ENCODE measurements at regions of chr13 and their contacts with region 1.

Region 1: DNA sequence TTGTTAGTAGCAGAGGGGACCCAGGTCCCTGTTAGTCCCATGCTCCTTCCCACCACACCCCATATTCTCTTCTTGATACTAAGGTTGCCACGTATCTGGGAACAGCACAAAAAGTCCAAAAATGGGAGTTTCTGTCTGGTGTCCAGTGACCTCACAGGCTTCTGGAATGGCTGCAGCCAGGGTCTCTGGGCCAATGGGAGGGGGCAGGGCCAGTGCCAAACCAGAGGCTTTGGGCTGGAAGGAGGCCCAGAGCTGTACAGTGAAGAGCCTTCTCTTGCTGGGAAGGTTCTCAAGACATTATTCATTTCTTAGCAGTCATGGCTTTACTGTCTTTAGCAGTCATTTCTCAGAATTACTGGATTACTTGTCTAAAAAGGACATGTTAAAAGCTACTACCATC is 119.2 kb downstream of the FRY start:
- DNase-seq: peak; percentile 86 to 92
- ATAC-seq: peak; percentile 94
- H3K4me3 ChIP-seq: no peak overlapping the region
- H3K27ac ChIP-seq: peak overlapping the region; percentile 96
- H3K4me1 ChIP-seq: peaks cover 1 to 3% of the 10 kb centered on the region in 2 donors
- H3K27me3 ChIP-seq: no peaks in the 10 kb centered on the region

Region 2: DNA sequence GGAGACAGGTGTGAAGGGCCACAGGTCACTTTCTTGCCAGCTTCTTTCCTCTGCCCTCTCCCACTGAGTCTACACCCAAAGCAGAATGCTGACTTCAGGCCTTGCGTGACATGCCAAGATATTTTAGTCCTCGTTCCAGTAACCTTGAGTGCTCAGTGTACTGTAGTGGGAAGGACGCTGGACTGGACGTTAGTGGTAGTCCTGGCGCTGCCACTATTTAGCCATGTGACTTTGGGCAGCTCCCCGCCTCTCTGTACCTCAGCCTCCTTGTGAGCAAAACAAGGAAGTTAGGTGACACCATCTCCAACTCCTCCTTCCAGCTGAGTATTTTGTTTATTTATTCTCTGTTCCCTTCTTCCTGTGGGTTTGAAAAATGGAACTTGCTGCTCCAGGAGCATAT is 33.1 kb before region 1 on chr13:
- intact Hi-C with region 1: loop called in 1 of 2 experiments (anchors 5 kb)
- DNase-seq: peak; percentile 67 to 83
- ATAC-seq: peak; percentile 88
- H3K4me3 ChIP-seq: no peak overlapping the region
- H3K27ac ChIP-seq: peak overlapping the region; percentile 52 to 59
- H3K4me1 ChIP-seq: peaks cover 2% of the 10 kb centered on the region in 2 donors
- H3K27me3 ChIP-seq: no peaks in the 10 kb centered on the region

Region 3: DNA sequence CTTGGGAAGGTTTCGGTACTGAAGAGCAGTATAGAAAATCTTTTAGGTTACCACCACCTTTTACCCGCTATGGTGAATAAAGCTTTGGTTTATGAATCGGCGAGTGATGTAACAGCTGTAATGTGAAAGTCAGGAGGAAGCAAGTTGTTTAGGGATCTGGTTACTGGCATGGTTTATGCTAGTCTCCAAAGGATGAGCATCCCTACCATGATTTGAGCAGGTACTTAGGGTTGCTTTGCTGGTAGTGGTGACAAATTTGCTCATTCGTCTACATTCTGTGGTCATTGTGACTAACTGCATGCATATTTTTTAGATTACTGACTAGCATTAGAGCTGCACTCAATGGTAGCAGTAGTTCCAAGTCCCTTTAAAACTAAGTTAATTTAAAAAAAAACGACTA is 15.1 kb before region 1 on chr13:
- intact Hi-C with region 1: loop called in 1 of 2 experiments (anchors 2 kb)
- DNase-seq: no peak
- ATAC-seq: no peak
- H3K4me3 ChIP-seq: no peak overlapping the region
- H3K27ac ChIP-seq: peak overlapping the region; percentile 77 to 100
- H3K4me1 ChIP-seq: peaks cover 5 to 11% of the 10 kb centered on the region in 2 donors
- H3K27me3 ChIP-seq: no peaks in the 10 kb centered on the region

Measured in aorta (tissue), 5 donors.